Activated naive CD4-positive, alpha-beta T cell treated with anti-CD3 and anti-CD28 coated beads for 36 hours (primary cell): ENCODE measurements at regions of chr11 and their contacts with region 1.

Region 1: DNA sequence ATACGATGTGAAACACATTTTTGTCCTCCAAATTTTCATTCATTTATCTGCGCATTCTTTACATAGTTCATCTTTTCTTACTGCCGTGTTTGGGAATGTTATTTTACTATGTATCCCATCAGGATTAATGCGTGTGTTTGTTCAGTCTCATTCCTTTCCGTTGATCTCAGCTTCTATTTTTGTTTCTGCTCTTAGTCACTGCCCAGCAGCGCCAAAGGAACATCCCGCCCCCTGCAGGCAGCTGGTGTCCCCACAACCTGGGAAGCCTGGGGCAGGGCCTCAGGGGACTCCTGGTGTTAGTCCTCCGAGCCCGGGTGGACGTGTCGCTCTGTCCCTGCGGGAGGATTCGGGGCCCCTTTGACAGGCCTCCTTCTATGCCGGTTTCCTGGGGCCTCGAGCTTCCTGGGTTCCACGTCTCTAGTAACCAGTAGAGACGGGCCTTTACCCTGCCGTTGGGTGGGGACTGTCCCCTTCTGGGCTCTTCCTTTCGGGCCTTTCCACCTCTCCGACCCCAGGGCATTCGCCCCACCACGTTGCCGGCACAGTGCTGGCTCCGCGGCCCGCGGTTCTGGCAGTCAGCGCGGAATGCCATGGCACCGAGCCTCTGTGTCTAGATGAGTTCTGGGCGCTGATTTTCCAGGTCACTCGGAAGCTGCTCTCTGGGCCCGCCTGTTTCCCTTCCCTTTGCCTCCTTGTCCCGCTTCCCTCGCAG is 39.8 kb downstream of the WEE1 start:
- DNase-seq: peak; percentile 94
- H3K4me3 Mint-ChIP-seq: peak overlapping the region; percentile 86
- H3K27ac Mint-ChIP-seq: peak overlapping the region; percentile 98
- H3K4me1 Mint-ChIP-seq: peaks cover 38% of the 10 kb centered on the region
- H3K27me3 Mint-ChIP-seq: no peaks in the 10 kb centered on the region

Region 2: GRCh38 chr11:9003573-9004309 is 609.5 kb before region 1 on chr11 and contains the start of gene NRIP3:
- CTCF ChIA-PET with region 1: no interaction called
- intact Hi-C with region 1: loop called (anchors 5 kb)
- DNase-seq: peak; percentile 67
- H3K4me3 Mint-ChIP-seq: peak within 1 kb of the TSS; percentile 68
- H3K27ac Mint-ChIP-seq: no peak within 1 kb of the TSS
- H3K4me1 Mint-ChIP-seq: peaks cover 24% of the 10 kb centered on the region
- H3K27me3 Mint-ChIP-seq: peaks cover 33% of the 10 kb centered on the region
- total RNA-seq, gene NRIP3: 3.0 to 3.5 TPM

Region 3: GRCh38 chr11:9363954-9364912 is 249.0 kb before region 1 on chr11:
- CTCF ChIA-PET with region 1: no interaction called
- intact Hi-C with region 1: loop called (anchors 5 kb)
- DNase-seq: peak; percentile 91
- H3K4me3 Mint-ChIP-seq: peak overlapping the region; percentile 66
- H3K27ac Mint-ChIP-seq: peak overlapping the region; percentile 73
- H3K4me1 Mint-ChIP-seq: peaks cover 35% of the 10 kb centered on the region
- H3K27me3 Mint-ChIP-seq: no peaks in the 10 kb centered on the region

Region 4: DNA sequence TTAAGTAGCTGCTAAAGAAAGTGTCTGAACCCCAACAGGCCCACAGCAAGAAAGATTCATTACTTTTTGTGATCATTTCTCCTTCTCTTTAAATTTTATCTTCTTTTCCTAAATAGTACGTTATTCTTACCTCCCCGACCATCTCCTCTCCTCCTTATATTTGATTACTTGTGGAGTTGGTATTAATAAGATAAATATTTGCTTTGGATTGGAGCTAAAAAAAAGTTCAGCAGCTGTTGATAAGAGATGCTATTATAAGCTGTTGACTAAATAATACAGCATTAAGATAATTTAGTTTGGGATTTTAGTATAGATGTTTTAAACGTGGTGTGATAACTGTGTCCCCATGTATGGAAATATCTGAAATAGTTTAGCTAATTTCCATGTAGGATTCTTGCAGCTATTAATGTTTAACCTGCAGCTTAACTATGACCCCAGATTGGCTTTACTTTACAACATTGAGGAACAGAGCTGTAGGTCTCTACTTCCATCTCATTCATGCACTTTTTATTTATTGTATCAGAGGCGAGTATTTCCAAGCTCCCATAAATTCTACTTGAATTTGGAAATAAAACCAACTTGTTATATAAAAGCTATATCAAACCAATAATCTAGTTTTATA is 114.7 kb before region 1 on chr11:
- CTCF ChIA-PET with region 1: no interaction called
- intact Hi-C with region 1: no loop called
- DNase-seq: no peak
- H3K4me3 Mint-ChIP-seq: no peak overlapping the region
- H3K27ac Mint-ChIP-seq: no peak overlapping the region
- H3K4me1 Mint-ChIP-seq: no peaks in the 10 kb centered on the region
- H3K27me3 Mint-ChIP-seq: no peaks in the 10 kb centered on the region

Region 5: DNA sequence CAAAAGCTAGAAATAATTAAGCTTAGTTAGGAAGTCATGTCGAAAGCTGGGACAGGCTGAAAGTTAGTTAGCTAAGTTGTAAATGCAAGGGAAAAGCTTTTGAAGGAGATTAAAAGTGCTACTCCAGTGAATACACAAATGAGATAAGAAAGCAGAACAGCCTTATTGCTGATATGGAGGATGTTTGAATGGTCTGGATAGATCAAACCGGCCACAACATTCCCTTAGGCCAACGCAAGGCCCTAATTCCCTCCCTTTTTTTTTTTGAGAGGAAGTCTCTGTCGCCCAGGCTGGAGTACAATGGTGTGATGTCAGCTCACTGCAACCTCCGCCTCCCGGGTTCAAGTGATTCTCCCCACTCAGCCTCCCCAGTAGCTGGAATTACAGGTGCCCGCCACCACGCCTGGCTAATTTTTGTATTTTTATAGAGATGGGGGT is 63.1 kb before region 1 on chr11:
- CTCF ChIA-PET with region 1: no interaction called
- intact Hi-C with region 1: no loop called
- DNase-seq: no peak
- H3K4me3 Mint-ChIP-seq: no peak overlapping the region
- H3K27ac Mint-ChIP-seq: no peak overlapping the region
- H3K4me1 Mint-ChIP-seq: no peaks in the 10 kb centered on the region
- H3K27me3 Mint-ChIP-seq: no peaks in the 10 kb centered on the region

Region 6: GRCh38 chr11:9573052-9573774 is 40.1 kb before region 1 on chr11 and contains the start of gene WEE1:
- CTCF ChIA-PET with region 1: interaction called, 10 read pairs
- intact Hi-C with region 1: loop called (anchors 1 kb)
- DNase-seq: peak; percentile 99
- H3K4me3 Mint-ChIP-seq: peak within 1 kb of the TSS; percentile 93
- H3K27ac Mint-ChIP-seq: peak within 1 kb of the TSS; percentile 77
- H3K4me1 Mint-ChIP-seq: peaks cover 27% of the 10 kb centered on the region
- H3K27me3 Mint-ChIP-seq: peaks cover 10% of the 10 kb centered on the region
- total RNA-seq, gene WEE1: 41.8 to 46.6 TPM

Region 7: DNA sequence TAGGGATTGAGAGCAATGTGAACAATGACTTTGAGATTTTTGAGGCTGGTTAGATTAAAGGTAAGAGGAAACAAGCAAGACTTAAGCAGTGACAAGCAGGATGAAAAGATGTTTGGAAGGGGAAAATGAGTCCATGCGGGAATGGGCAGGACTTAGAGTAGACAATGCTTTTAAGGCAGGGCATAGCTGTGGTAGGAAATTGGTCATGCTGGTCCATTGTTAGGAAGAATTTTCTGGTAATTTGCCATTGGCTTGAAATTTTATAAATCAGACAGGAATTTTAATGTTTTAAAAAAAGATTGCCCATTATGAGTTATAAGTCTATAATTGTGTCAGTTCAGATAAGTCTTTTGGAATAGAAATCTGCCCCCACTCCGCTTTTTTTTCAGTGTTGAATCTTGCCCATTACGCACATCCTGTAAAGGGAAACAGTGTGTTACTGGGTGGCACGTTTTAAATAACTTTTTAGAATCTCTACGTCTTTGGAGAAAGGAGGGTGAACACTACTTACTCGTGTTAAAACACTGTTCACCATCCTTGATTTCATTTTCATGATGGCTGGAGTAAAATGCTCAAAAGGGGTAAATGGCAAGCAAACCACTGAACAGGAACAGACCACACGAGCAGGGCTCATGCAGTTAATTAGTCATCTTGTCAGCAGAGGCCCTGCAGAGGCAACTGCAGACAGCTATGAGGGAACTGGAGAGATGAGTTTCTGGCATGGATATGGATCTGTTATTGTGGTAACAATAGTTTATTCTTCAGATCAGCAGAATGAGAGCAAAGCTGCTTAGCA is 75.6 kb after region 1 on chr11:
- CTCF ChIA-PET with region 1: no interaction called
- intact Hi-C with region 1: loop called (anchors 2 kb)
- DNase-seq: peak; percentile 38
- H3K4me3 Mint-ChIP-seq: no peak overlapping the region
- H3K27ac Mint-ChIP-seq: no peak overlapping the region
- H3K4me1 Mint-ChIP-seq: peaks cover 2% of the 10 kb centered on the region
- H3K27me3 Mint-ChIP-seq: no peaks in the 10 kb centered on the region

Region 8: GRCh38 chr11:9757809-9758636 is 144.7 kb after region 1 on chr11:
- CTCF ChIA-PET with region 1: interaction called, 17 read pairs
- intact Hi-C with region 1: loop called (anchors 1 kb)
- DNase-seq: peak; percentile 94
- H3K4me3 Mint-ChIP-seq: peak overlapping the region; percentile 73
- H3K27ac Mint-ChIP-seq: peak overlapping the region; percentile 81
- H3K4me1 Mint-ChIP-seq: peaks cover 42% of the 10 kb centered on the region
- H3K27me3 Mint-ChIP-seq: no peaks in the 10 kb centered on the region

Region 9: DNA sequence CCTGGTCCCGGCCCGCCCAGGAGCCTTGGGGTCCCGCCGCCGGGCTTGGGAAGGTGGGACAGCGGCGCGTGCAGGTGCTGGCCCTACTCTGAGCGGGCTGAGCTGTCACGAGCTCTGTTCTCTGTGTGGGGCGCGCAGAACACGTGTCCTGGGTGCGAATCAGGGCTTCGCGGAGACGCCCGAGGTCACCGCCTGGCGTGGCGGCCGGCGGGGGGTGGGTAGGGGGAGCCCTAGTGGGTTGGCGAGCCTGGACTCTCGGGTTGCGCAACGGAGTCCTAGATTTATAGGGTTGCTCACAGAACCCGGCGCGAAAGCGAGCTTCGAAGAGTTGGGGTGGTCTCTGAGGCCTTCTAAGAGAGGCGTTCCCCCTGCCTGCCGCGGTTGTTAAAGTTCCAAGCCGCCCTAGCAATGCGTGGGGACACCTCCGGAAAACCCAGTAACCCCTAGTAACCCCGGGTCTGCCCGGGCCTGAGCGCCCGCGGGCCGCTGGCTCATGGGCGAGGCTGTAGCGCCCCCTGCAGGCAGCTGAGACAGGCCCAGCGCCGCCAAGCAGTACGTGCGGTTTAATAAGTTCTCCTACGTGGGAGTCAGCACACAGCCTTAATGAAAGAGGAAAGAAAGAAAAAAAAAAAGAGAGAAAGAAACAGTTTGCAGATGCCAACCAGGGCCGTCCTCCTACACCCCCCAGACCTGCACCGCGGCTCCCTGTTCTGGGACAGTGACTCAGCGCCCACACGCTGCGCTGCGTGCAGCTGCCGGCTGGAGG is 694.4 kb after region 1 on chr11:
- CTCF ChIA-PET with region 1: interaction called, 3 read pairs
- intact Hi-C with region 1: loop called (anchors 1 kb)
- DNase-seq: peak; percentile 87
- H3K4me3 Mint-ChIP-seq: peak overlapping the region; percentile 81
- H3K27ac Mint-ChIP-seq: peak overlapping the region; percentile 59
- H3K4me1 Mint-ChIP-seq: peaks cover 33% of the 10 kb centered on the region
- H3K27me3 Mint-ChIP-seq: peaks cover 41% of the 10 kb centered on the region